H1 (cell line): ENCODE measurements at regions of chr17 and their contacts with region 1.

Region 1: DNA sequence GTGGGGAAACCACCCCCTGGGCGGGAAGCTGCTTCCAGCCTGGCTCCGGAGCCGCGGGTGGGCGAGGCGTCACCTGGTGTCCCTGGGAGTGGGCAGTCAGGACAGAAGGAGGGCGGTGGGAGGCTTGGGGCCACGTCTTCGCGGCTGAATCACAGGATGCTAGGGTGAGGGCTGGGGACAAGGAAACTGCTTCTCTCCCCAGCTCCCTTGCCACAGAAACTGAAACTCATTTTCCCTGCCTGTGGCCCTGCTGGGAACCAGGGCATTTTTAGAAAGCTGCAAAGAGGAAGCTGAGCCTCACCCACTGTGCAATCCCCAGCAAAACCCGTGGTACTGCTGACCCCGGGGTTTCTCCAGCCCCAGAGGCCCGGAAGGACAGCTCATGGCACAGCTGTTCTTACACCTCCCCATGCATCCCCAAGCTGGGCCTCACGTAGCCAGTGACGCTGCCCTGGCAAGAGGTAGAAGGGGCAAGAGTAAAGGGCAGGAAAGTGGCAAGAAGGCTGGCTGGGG is 8.2 kb downstream of the RHBDF2 start:
- DNase-seq: no peak
- H3K4me3 ChIP-seq: no peak overlapping the region
- H3K27ac ChIP-seq: no peak overlapping the region
- H3K4me1 ChIP-seq: peaks cover 8 to 27% (median 20%) of the 10 kb centered on the region in 4 experiments
- H3K27me3 ChIP-seq: no peaks in the 10 kb centered on the region
- CTCF ChIP-seq: no peak
- EP300 ChIP-seq: no peak
- POLR2A ChIP-seq: no peak
- RAD21 ChIP-seq: no peak

Region 2: DNA sequence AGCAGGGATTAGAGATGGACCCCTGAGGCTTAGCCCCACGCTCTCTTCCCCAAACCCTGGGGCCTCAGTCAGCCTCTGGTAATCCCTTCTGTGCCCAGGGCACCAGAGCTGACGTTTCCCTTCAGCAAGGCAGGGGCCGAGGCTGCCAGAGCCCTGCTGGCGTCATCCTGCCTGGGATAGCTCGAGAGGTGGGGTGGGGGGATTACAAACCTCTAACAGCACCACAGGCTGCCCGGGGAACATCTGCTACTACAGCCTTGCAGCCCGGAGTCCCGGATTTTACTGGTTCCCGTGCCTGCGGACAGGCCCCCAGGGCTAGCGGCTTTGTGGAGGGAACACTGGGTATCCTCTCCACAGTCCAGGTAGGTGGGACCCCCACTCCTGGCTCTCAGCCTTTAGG is 25.7 kb before region 1 on chr17 and contains the start of gene AANAT:
- CTCF ChIA-PET with region 1: interaction called, 446 read pairs
- POLR2A ChIA-PET with region 1: interaction called, 3 read pairs
- DNase-seq: peak in 1 of 2 experiments; percentile 47
- H3K4me3 ChIP-seq: no peak within 1 kb of the TSS
- H3K27ac ChIP-seq: no peak within 1 kb of the TSS
- H3K4me1 ChIP-seq: peaks cover 0 to 9% (median 0%) of the 10 kb centered on the region in 4 experiments; a peak in 2 of 7 replicates
- H3K27me3 ChIP-seq: no peaks in the 10 kb centered on the region
- CTCF ChIP-seq: no peak
- EP300 ChIP-seq: no peak
- POLR2A ChIP-seq: no peak
- RAD21 ChIP-seq: no peak
- total RNA-seq, gene AANAT: not detected in 2 replicates

Region 3: DNA sequence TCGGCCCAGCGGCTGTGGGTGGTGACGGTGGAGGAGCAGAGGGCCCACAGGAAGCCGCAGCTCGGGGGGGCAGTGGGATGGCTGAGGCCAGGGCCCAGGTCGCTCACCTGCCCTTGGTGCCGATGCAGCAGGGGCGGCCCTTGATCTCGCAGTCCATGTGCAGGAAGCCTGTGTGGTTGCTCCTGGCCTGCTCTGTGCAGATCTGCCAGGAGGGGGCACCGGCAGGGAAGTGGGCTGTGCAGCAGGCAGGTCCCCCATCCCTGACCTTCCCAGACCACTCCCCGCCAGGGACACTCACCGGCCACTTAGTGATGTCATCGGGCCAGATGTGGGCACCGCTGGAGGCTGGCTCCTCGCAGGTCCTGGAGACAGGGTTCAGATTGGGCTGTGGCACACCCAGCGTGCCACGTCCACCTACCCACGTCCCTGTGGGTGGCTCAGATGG is 19.5 kb before region 1 on chr17:
- CTCF ChIA-PET with region 1: interaction called, 446 read pairs
- POLR2A ChIA-PET with region 1: interaction called, 6 read pairs
- DNase-seq: peak in 1 of 2 experiments; percentile 85
- H3K4me3 ChIP-seq: no peak overlapping the region
- H3K27ac ChIP-seq: no peak overlapping the region
- H3K4me1 ChIP-seq: no peaks in the 10 kb centered on the region
- H3K27me3 ChIP-seq: no peaks in the 10 kb centered on the region
- CTCF ChIP-seq: peak; percentile 71 to 83 (median 78)
- EP300 ChIP-seq: no peak
- POLR2A ChIP-seq: no peak
- RAD21 ChIP-seq: peak; percentile 48 to 68

Region 4: GRCh38 chr17:76506408-76507349 is 13.6 kb after region 1 on chr17:
- CTCF ChIA-PET with region 1: interaction called, 27 read pairs
- POLR2A ChIA-PET with region 1: interaction called, 3 read pairs
- DNase-seq: peak; percentile 56 to 99
- H3K4me3 ChIP-seq: peak overlapping the region in 1 of 4 experiments; percentile 40; a peak in 2 of 8 replicates
- H3K27ac ChIP-seq: no peak overlapping the region
- H3K4me1 ChIP-seq: peaks cover 4 to 9% (median 6%) of the 10 kb centered on the region in 4 experiments
- H3K27me3 ChIP-seq: peaks cover 0 to 6% (median 4%) of the 10 kb centered on the region in 4 experiments; a peak in 5 of 7 replicates
- CTCF ChIP-seq: peak; percentile 92 to 98 (median 93)
- EP300 ChIP-seq: no peak
- POLR2A ChIP-seq: no peak
- RAD21 ChIP-seq: peak; percentile 96 to 97

Region 5: GRCh38 chr17:76597728-76598474 is 104.9 kb after region 1 on chr17:
- CTCF ChIA-PET with region 1: no interaction called
- POLR2A ChIA-PET with region 1: no interaction called
- DNase-seq: no peak
- H3K4me3 ChIP-seq: no peak overlapping the region
- H3K27ac ChIP-seq: no peak overlapping the region
- H3K4me1 ChIP-seq: peaks cover 0 to 7% (median 3%) of the 10 kb centered on the region in 4 experiments; a peak in 3 of 7 replicates
- H3K27me3 ChIP-seq: no peaks in the 10 kb centered on the region; a peak in 2 of 7 replicates
- CTCF ChIP-seq: no peak
- EP300 ChIP-seq: no peak
- POLR2A ChIP-seq: no peak
- RAD21 ChIP-seq: no peak